ENCODE measurements at regions of chr19 and their contacts with region 1.

Region 1: GRCh38 chr19:54159352-54160181 is at the start of gene LENG1:
- DNase-seq: peak; percentile 100
- ATAC-seq: peak; percentile 91
- H3K4me3 Mint-ChIP-seq: peak within 1 kb of the TSS; percentile 98
- H3K27ac Mint-ChIP-seq: peak within 1 kb of the TSS; percentile 100
- H3K4me1 Mint-ChIP-seq: peaks cover 67% of the 10 kb centered on the region
- H3K27me3 Mint-ChIP-seq: peaks cover 2% of the 10 kb centered on the region
- total RNA-seq, gene LENG1: 6.6 to 7.5 TPM

Region 2: GRCh38 chr19:54073829-54074228 is 85.7 kb before region 1 on chr19:
- CTCF ChIA-PET with region 1: no interaction called
- POLR2A ChIA-PET with region 1: no interaction called
- DNase-seq: no peak
- ATAC-seq: no peak
- H3K4me3 Mint-ChIP-seq: no peak overlapping the region
- H3K27ac Mint-ChIP-seq: no peak overlapping the region
- H3K4me1 Mint-ChIP-seq: no peaks in the 10 kb centered on the region
- H3K27me3 Mint-ChIP-seq: no peaks in the 10 kb centered on the region

Region 3: DNA sequence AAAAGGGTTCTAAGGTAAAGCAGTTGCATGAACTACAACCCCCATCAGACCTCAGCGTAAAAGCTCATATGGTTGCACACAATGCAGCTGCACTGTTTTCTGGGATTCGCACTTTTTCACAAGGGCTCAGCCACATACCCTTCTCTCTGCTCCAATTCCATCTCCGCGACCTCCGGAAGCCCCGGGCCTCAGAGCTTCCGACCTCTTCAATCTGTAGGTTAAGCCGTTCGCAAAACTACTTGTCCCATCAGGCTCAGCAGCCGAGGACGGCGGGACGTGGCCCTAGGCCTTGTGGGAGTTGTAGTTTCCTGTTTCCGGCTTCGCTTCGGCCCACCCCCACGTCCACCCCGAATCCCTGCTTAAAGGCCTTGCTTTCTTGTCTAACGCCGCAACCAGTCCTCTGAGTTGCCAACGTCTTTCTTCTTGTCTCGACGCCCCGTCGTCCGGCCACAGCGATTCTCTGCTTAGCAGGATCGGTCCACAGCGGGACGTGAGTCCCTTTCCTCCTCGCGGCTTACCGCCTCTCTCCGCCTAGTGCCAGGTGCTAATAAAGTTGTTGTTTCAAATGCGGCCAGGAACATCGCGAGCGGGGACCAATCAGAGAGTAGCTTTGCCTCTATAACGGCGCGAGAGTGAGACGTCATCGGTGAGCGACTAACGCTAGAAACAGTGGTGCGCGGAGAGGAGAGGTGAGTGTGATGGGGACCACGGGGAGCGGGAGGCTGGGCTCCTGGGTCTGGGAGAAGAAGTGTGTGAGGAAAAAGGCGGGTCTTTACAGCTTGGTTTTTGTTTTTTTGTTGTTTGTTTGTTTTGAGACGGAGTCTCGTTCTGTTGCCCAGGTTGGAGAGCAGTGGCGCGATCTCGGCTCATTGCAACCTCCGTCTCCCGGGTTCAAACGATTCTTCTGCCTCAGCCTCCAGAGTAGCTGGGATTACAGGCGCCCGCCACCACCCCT is 44.2 kb before region 1 on chr19 and contains the starts of genes PRPF31 and TFPT:
- CTCF ChIA-PET with region 1: no interaction called
- POLR2A ChIA-PET with region 1: interaction called, 11 read pairs
- DNase-seq: peak; percentile 98
- ATAC-seq: peak; percentile 92
- H3K4me3 Mint-ChIP-seq: peak within 1 kb of the TSS; percentile 98
- H3K27ac Mint-ChIP-seq: peak within 1 kb of the TSS; percentile 94
- H3K4me1 Mint-ChIP-seq: peaks cover 29% of the 10 kb centered on the region
- H3K27me3 Mint-ChIP-seq: no peaks in the 10 kb centered on the region
- total RNA-seq, gene PRPF31: 77.5 to 82.8 TPM
- total RNA-seq, gene TFPT: 50.9 to 51.4 TPM

Region 4: GRCh38 chr19:54137086-54137921 is 22.3 kb before region 1 on chr19 and contains the start of gene CNOT3:
- CTCF ChIA-PET with region 1: interaction called, 5 read pairs
- POLR2A ChIA-PET with region 1: interaction called, 18 read pairs
- DNase-seq: peak; percentile 100
- ATAC-seq: peak; percentile 88
- H3K4me3 Mint-ChIP-seq: peak within 1 kb of the TSS; percentile 84
- H3K27ac Mint-ChIP-seq: peak within 1 kb of the TSS; percentile 92
- H3K4me1 Mint-ChIP-seq: peaks cover 45% of the 10 kb centered on the region
- H3K27me3 Mint-ChIP-seq: no peaks in the 10 kb centered on the region
- total RNA-seq, gene CNOT3: 55.1 to 58.4 TPM

Region 5: DNA sequence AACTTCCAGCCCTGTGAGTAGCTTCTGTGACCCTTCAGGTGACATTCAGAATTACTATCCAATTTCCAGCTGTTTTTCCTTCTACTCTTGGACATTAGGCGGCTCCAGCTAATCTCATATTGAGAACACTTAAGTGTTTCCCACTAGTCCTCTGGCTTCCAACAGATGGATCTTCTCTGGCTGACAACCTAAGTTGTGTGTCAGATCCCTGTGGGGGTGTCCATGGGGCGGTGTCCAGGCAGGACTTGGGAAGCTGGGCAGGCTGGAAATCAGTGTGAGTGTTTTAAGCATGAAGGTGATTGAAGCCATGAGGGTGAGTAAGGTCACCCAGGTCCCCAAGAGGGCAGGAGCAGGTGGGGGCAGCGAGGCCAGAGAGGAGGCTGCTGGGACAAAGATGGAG is 11.9 kb before region 1 on chr19:
- CTCF ChIA-PET with region 1: no interaction called
- POLR2A ChIA-PET with region 1: interaction called, 12 read pairs
- DNase-seq: no peak
- ATAC-seq: no peak
- H3K4me3 Mint-ChIP-seq: no peak overlapping the region
- H3K27ac Mint-ChIP-seq: no peak overlapping the region
- H3K4me1 Mint-ChIP-seq: no peaks in the 10 kb centered on the region
- H3K27me3 Mint-ChIP-seq: no peaks in the 10 kb centered on the region

Region 6: DNA sequence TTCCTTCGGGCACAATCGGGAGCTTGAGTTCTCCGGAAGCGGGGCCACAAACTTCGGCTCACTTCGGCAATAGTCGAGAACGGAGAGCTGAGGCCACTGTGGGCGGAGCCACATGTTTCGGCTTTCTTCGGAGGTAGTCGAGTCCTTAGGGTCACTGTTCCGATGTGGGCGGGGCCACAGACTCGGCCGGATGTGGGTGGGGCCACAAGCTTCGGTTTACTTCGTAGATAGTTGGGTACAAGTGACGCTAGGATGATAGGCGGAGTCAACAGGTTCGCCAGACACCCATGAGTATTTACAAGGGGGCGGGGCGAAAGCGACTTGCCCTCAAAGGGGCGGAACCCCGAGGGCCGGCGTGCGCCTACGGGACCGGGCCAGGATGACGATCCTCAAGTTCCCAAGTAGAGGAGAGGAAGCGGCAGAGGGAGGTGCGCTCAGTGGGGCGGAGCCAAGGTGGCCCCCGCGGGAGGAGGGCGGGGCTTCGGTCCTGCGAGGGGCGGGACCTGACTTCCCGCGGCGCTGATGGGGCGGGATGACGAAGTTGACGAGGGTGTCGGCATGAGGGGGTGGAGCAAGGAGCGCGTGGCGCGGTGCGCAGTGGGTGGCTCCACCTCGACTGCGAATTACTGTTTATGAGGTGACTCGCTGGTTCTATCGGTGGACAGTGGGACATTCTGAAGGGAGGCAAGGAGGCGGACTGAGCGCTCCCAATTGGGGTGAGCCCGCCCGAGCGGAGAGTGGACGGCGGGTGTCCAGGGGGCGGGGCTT is 30.4 kb after region 1 on chr19:
- CTCF ChIA-PET with region 1: interaction called, 11 read pairs
- POLR2A ChIA-PET with region 1: interaction called, 14 read pairs
- DNase-seq: peak; percentile 100
- ATAC-seq: peak; percentile 63
- H3K4me3 Mint-ChIP-seq: peak overlapping the region; percentile 82
- H3K27ac Mint-ChIP-seq: peak overlapping the region; percentile 98
- H3K4me1 Mint-ChIP-seq: peaks cover 39% of the 10 kb centered on the region
- H3K27me3 Mint-ChIP-seq: no peaks in the 10 kb centered on the region

Region 7: GRCh38 chr19:54203151-54203611 is 43.6 kb after region 1 on chr19:
- CTCF ChIA-PET with region 1: no interaction called
- POLR2A ChIA-PET with region 1: interaction called, 13 read pairs
- DNase-seq: no peak
- ATAC-seq: no peak
- H3K4me3 Mint-ChIP-seq: peak overlapping the region; percentile 100
- H3K27ac Mint-ChIP-seq: no peak overlapping the region
- H3K4me1 Mint-ChIP-seq: peaks cover 81% of the 10 kb centered on the region
- H3K27me3 Mint-ChIP-seq: no peaks in the 10 kb centered on the region